Activated T-helper 1 cell treated with anti-CD3 and anti-CD28 coated beads, Interleukin-12 subunit alpha, Interleukin-12 subunit beta, Interleukin-2, Interleukin-4 antibody, amounts not matched to agents 30 ng/mL and 10 ng/mL and 1 ng/mL, durations not matched to agents 14 hours and 24 hours and 36 hours (primary cell): ENCODE measurements at regions of chr3 and their contacts with region 1.

Region 1: GRCh38 chr3:59935025-59935424 is 885.2 kb upstream of the CFAP20DC start:
- DNase-seq: peak; percentile 6
- H3K4me3 Mint-ChIP-seq: peak overlapping the region; percentile 54
- H3K27ac Mint-ChIP-seq: peak overlapping the region; percentile 82
- H3K4me1 Mint-ChIP-seq: peaks cover 43% of the 10 kb centered on the region
- H3K27me3 Mint-ChIP-seq: no peaks in the 10 kb centered on the region

Region 2: DNA sequence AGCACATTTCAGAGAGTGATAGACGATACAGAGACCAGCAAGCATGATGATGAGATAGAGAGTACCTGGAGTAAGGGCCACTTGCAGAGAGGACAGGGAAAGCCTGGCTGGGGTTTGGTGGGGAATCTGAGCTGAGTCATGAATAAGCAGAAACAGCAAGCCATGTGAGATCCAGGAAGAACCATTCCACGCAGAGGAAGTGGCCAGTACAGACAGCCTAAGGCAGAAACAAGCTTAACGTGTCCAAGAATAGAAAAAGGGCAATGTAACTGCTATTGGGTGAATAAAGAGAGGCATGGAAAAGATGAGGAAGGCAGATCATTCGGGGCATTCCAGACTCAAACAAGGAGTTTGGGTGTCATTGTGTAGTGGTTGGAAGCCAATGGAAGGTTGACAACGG is 68.9 kb before region 1 on chr3:
- intact Hi-C with region 1: loop called (anchors 2 kb)
- DNase-seq: no peak
- H3K4me3 Mint-ChIP-seq: no peak overlapping the region
- H3K27ac Mint-ChIP-seq: no peak overlapping the region
- H3K4me1 Mint-ChIP-seq: peaks cover 40% of the 10 kb centered on the region
- H3K27me3 Mint-ChIP-seq: no peaks in the 10 kb centered on the region

Region 3: DNA sequence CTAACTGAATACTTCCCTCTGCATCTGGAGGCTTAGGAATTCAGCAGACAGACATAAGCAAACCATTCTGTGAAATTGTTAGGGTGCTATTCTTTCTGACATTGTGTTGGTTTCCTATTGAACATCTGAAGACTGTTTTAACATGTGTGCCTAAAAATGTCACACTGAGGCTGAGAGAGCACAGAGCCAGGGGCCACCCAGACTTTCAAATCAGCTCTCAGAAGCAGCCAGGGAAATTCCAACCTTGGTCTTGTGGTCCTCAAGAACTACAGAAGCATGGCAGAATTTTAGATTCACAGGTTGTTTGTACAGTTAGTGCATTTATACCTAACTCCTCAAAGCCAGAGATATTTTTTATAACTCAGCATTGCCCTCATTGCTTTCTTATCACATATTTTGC is 44.0 kb after region 1 on chr3:
- intact Hi-C with region 1: loop called (anchors 1 kb)
- DNase-seq: peak; percentile 38
- H3K4me3 Mint-ChIP-seq: peak overlapping the region; percentile 64
- H3K27ac Mint-ChIP-seq: peak overlapping the region; percentile 93
- H3K4me1 Mint-ChIP-seq: peaks cover 45% of the 10 kb centered on the region
- H3K27me3 Mint-ChIP-seq: no peaks in the 10 kb centered on the region

Region 4: GRCh38 chr3:60053526-60054265 is 118.7 kb after region 1 on chr3:
- intact Hi-C with region 1: loop called (anchors 1 kb)
- DNase-seq: no peak
- H3K4me3 Mint-ChIP-seq: peak overlapping the region; percentile 21
- H3K27ac Mint-ChIP-seq: peak overlapping the region; percentile 75
- H3K4me1 Mint-ChIP-seq: peaks cover 86% of the 10 kb centered on the region
- H3K27me3 Mint-ChIP-seq: no peaks in the 10 kb centered on the region

Region 5: GRCh38 chr3:61520966-61521628 is 1586.1 kb after region 1 on chr3:
- intact Hi-C with region 1: loop called (anchors 5 kb)
- DNase-seq: peak; percentile 61
- H3K4me3 Mint-ChIP-seq: peak overlapping the region; percentile 57
- H3K27ac Mint-ChIP-seq: peak overlapping the region; percentile 78
- H3K4me1 Mint-ChIP-seq: peaks cover 57% of the 10 kb centered on the region
- H3K27me3 Mint-ChIP-seq: no peaks in the 10 kb centered on the region